Aorta (tissue), 5 donors: ENCODE measurements at regions of chr13 and their contacts with region 1.

Region 1: DNA sequence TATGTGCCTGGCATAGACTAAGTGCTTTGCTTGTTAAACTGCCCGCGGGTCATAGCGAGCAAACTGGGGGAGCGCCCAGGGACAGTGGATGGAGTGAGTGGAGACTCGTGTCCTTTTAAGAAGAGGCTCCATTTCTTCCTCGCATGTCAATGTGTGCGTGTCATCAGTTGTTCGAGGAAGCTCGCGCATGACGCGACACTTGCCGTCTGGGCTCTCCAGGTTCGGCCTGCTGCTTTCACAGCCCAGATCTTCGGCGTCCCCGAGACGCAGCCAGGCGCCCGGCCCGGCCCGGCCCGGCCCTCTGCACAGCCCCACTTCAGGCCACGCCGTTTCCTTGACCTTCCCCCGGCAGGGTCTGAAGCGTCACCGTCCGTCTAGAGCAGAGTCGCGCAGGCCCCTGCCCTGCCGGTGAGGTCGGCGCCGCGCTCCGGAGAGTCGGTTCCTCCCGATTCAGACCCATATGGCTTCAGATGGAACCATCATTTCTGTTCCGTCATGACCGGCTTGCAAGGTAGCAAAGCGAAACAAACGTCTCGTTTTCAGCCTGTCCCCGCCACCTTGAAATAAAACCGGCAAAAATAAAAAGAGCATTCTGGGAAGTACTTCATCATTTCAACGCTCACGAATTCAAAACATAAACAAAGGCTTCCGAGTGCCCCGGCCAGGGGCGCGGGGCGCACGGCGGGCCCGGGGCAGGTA is 599 bp upstream of the ARHGEF7 start:
- DNase-seq: peak; percentile 78 to 90
- ATAC-seq: peak; percentile 65
- H3K4me3 ChIP-seq: peak overlapping the region; percentile 23 to 99
- H3K27ac ChIP-seq: peak overlapping the region; percentile 34 to 89
- H3K4me1 ChIP-seq: peaks cover 0 to 2% of the 10 kb centered on the region in 2 donors
- H3K27me3 ChIP-seq: no peaks in the 10 kb centered on the region

Region 2: DNA sequence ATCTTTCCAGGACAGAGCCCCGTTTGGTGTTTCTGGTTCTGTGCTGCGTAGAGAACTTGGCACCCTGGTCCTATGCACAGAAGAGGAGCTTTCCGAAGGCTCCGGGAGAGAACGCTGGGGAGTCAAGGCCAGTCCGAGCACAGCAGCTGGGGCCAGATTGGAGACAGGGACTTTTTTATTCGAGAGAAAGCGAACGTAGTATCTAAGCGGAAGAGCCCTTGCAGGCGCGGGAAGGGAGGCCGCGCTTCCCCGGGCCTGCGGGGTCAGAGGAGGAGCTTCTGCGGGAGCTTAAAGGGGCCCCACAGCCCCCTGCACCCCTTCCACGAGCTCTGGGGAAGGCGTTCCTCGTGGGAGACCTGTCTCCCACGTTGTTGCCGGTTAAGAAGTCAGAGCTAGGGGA is 48.0 kb before region 1 on chr13:
- intact Hi-C with region 1: loop called in 1 of 2 experiments (anchors 5 kb)
- DNase-seq: no peak
- ATAC-seq: no peak
- H3K4me3 ChIP-seq: no peak overlapping the region
- H3K27ac ChIP-seq: no peak overlapping the region
- H3K4me1 ChIP-seq: no peaks in the 10 kb centered on the region
- H3K27me3 ChIP-seq: no peaks in the 10 kb centered on the region

Region 3: DNA sequence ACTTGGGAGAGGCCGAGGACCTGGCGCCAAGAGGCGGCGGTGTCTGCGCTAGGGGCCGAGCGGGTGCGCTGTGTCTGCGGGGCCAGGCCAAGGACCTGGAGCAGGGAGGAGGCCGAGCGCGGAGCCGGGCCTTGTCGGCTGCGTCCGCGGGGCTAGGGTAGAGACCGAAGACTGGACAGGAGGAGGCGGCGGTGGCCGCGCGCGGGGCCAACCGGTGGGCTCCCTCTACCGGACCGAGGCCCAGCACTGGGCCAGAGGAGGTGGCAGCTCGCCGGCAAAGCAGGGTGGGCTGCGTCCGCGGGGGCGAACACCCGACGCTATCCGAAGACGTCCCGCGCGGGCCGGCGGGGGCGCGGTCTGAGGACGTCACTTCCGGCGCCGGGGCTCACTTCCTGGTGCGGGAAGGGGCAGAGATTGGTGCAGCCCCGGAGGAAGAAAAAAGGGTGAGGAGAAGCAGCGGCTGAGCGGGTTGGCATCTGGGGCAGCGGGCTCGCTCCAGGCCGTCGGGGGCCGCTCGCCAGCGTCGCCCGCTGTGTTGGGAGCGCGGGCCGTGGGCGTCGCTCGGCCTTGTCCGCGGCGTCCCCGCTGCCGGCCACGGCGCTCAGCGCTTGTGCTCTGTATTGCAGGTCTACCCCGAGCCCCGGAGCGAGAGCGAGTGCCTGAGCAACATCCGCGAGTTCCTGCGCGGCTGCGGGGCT is 38.9 kb after region 1 on chr13:
- intact Hi-C with region 1: loop called (anchors 2 to 5 kb)
- DNase-seq: peak; percentile 96 to 98
- ATAC-seq: peak; percentile 97
- H3K4me3 ChIP-seq: peak overlapping the region; percentile 66 to 87
- H3K27ac ChIP-seq: peak overlapping the region; percentile 71 to 99
- H3K4me1 ChIP-seq: peaks cover 6% of the 10 kb centered on the region in 2 donors
- H3K27me3 ChIP-seq: no peaks in the 10 kb centered on the region

Region 4: DNA sequence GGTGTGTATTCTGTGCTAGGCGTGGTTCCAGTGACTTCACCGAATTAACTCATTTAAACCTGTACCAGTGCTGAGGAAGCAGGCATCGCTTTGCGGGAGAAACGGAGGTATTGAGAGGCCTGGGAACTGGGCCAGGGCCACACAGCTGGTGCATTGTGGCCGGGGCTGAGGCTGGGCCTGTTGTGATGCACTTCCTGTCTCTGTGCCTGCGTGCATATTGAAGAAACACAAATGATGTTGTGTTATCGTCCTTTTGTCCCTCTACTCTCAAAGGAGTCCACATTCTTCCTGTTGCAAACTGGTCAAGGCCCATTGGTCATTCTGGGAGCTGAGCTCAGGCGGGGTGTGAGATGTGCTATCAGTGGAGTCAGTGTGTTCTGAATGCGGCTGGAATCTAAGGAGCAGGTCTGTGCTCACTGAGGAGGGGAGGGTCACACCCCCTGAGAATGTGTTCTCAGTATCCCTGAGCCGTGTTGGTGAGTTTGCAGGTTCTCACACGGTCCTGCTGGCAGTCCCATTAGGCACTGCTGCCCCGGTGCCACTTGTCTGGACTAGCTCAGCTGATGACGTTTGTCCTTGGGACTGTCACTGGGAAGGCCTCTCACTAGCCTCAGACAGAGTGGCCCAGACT is 62.7 kb after region 1 on chr13:
- intact Hi-C with region 1: no loop called
- DNase-seq: peak in 1 of 2 donors; percentile 75
- ATAC-seq: peak; percentile 65
- H3K4me3 ChIP-seq: no peak overlapping the region
- H3K27ac ChIP-seq: peak overlapping the region; percentile 99 to 100
- H3K4me1 ChIP-seq: peaks cover 9 to 13% of the 10 kb centered on the region in 2 donors
- H3K27me3 ChIP-seq: no peaks in the 10 kb centered on the region

Region 5: GRCh38 chr13:111216166-111216960 is 101.9 kb after region 1 on chr13:
- intact Hi-C with region 1: loop called (anchors 2 to 5 kb)
- DNase-seq: peak in 1 of 2 donors; percentile 82
- ATAC-seq: no peak
- H3K4me3 ChIP-seq: no peak overlapping the region
- H3K27ac ChIP-seq: peak overlapping the region in 1 of 2 donors; percentile 49
- H3K4me1 ChIP-seq: peaks cover 0 to 4% of the 10 kb centered on the region in 2 donors
- H3K27me3 ChIP-seq: no peaks in the 10 kb centered on the region

Region 6: GRCh38 chr13:111281751-111282311 is 167.3 kb after region 1 on chr13:
- intact Hi-C with region 1: loop called in 1 of 2 experiments (anchors 10 kb)
- DNase-seq: no peak
- ATAC-seq: peak; percentile 66
- H3K4me3 ChIP-seq: no peak overlapping the region
- H3K27ac ChIP-seq: peak overlapping the region; percentile 89 to 96
- H3K4me1 ChIP-seq: peaks cover 3 to 7% of the 10 kb centered on the region in 2 donors
- H3K27me3 ChIP-seq: no peaks in the 10 kb centered on the region